Naive thymus-derived CD4-positive, alpha-beta T cell (primary cell): ENCODE measurements at regions of chr3 and their contacts with region 1.

Region 1: GRCh38 chr3:189132231-189132707 is 39.5 kb upstream of the TPRG1 start:
- DNase-seq: peak in 8 of 9 donors; percentile 20 to 76 (median 62)
- ATAC-seq: peak; percentile 96
- H3K4me3 ChIP-seq: peak overlapping the region; percentile 26
- H3K4me3 Mint-ChIP-seq: peak overlapping the region; percentile 39 to 83 (median 71)
- H3K27ac ChIP-seq: peak overlapping the region; percentile 22
- H3K27ac Mint-ChIP-seq: peak overlapping the region; percentile 43 to 98 (median 79)
- H3K4me1 ChIP-seq: peaks cover 13 to 34% of the 10 kb centered on the region in 2 donors
- H3K4me1 Mint-ChIP-seq: peaks cover 13 to 38% (median 23%) of the 10 kb centered on the region in 7 donors
- H3K27me3 ChIP-seq: no peaks in the 10 kb centered on the region
- H3K27me3 Mint-ChIP-seq: no peaks in the 10 kb centered on the region

Region 2: GRCh38 chr3:187802928-187803259 is 1329.4 kb before region 1 on chr3:
- CTCF ChIA-PET with region 1: no interaction called
- POLR2A ChIA-PET with region 1: no interaction called
- intact Hi-C with region 1: loop called in 1 of 2 experiments (anchors 1 kb)
- DNase-seq: peak in 1 of 9 donors; percentile 66
- ATAC-seq: peak; percentile 56
- H3K4me3 ChIP-seq: no peak overlapping the region
- H3K4me3 Mint-ChIP-seq: peak overlapping the region in 6 of 10 donors; percentile 14 to 69 (median 34)
- H3K27ac ChIP-seq: no peak overlapping the region
- H3K27ac Mint-ChIP-seq: peak overlapping the region in 1 of 9 donors; percentile 90
- H3K4me1 ChIP-seq: peaks cover 22 to 47% of the 10 kb centered on the region in 2 donors
- H3K4me1 Mint-ChIP-seq: peaks cover 23 to 93% (median 44%) of the 10 kb centered on the region in 7 donors
- H3K27me3 ChIP-seq: no peaks in the 10 kb centered on the region
- H3K27me3 Mint-ChIP-seq: no peaks in the 10 kb centered on the region

Region 3: GRCh38 chr3:188389711-188390342 is 742.4 kb before region 1 on chr3:
- CTCF ChIA-PET with region 1: no interaction called
- POLR2A ChIA-PET with region 1: no interaction called
- intact Hi-C with region 1: loop called in 1 of 2 experiments (anchors 10 kb)
- DNase-seq: peak in 7 of 9 donors; percentile 13 to 45 (median 34)
- ATAC-seq: peak; percentile 91
- H3K4me3 ChIP-seq: no peak overlapping the region
- H3K4me3 Mint-ChIP-seq: peak overlapping the region in 8 of 10 donors; percentile 5 to 70 (median 17)
- H3K27ac ChIP-seq: no peak overlapping the region
- H3K27ac Mint-ChIP-seq: peak overlapping the region in 8 of 9 donors; percentile 4 to 74 (median 60)
- H3K4me1 ChIP-seq: no peaks in the 10 kb centered on the region
- H3K4me1 Mint-ChIP-seq: peaks cover 18 to 32% (median 26%) of the 10 kb centered on the region in 7 donors
- H3K27me3 ChIP-seq: no peaks in the 10 kb centered on the region
- H3K27me3 Mint-ChIP-seq: no peaks in the 10 kb centered on the region

Region 4: GRCh38 chr3:188914552-188914951 is 217.7 kb before region 1 on chr3:
- CTCF ChIA-PET with region 1: no interaction called
- POLR2A ChIA-PET with region 1: no interaction called
- intact Hi-C with region 1: loop called in 1 of 2 experiments (anchors 1 kb)
- DNase-seq: no peak
- ATAC-seq: peak; percentile 70
- H3K4me3 ChIP-seq: no peak overlapping the region
- H3K4me3 Mint-ChIP-seq: peak overlapping the region in 1 of 10 donors; percentile 41
- H3K27ac ChIP-seq: no peak overlapping the region
- H3K27ac Mint-ChIP-seq: peak overlapping the region in 2 of 9 donors; percentile 28 to 34
- H3K4me1 ChIP-seq: peaks cover 16 to 18% of the 10 kb centered on the region in 2 donors
- H3K4me1 Mint-ChIP-seq: peaks cover 21 to 42% (median 32%) of the 10 kb centered on the region in 7 donors
- H3K27me3 ChIP-seq: no peaks in the 10 kb centered on the region
- H3K27me3 Mint-ChIP-seq: no peaks in the 10 kb centered on the region

Region 5: DNA sequence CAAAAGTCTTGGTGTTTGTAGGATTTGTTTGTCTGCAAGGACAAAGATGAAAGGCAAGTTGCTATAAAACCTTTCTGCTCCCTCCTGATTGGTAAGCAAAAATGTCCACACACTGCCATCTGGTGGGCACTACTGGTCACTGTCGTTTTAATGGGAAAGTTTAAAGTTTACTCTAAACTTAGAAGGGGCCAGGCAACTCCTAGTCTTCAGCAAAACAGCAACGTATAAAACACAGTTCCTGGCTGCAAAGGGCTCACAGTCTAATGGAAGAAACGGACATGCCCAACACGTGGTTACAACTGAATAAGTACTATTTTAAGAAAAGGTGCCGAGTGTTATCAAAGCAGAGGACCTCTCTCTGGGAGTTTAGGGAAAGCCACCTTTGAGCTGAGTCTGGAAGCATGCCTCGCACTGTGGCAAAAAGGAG is 15.8 kb after region 1 on chr3:
- CTCF ChIA-PET with region 1: interaction called, 6 read pairs
- POLR2A ChIA-PET with region 1: no interaction called
- intact Hi-C with region 1: loop called in 1 of 2 experiments (anchors 1 kb)
- DNase-seq: peak; percentile 22 to 61 (median 51)
- ATAC-seq: peak; percentile 85
- H3K4me3 ChIP-seq: no peak overlapping the region
- H3K4me3 Mint-ChIP-seq: no peak overlapping the region
- H3K27ac ChIP-seq: no peak overlapping the region
- H3K27ac Mint-ChIP-seq: peak overlapping the region in 1 of 9 donors; percentile 21
- H3K4me1 ChIP-seq: peaks cover 0 to 16% of the 10 kb centered on the region in 2 donors
- H3K4me1 Mint-ChIP-seq: peaks cover 6 to 35% (median 8%) of the 10 kb centered on the region in 7 donors
- H3K27me3 ChIP-seq: no peaks in the 10 kb centered on the region
- H3K27me3 Mint-ChIP-seq: peaks cover 0 to 20% (median 0%) of the 10 kb centered on the region in 5 donors

Region 6: DNA sequence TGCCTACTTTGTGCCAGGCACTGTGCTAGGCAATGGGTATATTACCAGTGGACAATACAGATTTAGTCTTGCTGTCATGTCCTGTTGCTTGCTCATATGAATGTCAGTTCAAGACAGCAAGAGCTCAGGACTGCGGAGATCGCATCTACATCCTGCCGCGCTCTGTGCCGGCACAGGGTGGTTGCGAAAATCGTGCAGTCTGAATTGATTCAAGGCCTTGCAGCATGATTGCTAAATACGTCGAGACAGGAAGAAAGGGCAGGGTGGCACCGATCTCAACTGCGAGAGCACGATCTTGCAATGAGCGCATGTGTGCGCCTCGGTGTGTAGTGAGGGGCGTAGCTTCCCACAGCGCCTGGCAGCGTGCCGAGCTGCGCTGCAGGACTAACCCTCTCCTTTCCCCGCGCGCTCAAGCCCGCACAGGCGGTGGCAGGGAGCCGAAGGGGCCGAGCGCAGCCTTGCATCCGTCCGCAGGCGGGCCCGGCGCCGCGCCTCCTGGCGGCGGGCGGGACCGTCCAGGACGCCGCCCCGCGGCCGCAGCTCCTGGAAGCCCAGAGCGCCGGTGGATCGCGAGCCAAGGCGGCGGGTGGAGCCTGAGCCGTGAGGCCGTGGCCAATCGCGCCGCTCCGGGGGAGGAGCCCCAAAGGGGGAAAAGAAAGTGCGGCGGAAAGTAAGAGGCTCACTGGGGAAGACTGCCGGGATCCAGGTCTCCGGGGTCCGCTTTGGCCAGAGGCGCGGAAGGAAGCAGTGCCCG is 1381.3 kb after region 1 on chr3 and contains the start of gene IL1RAP:
- CTCF ChIA-PET with region 1: no interaction called
- POLR2A ChIA-PET with region 1: no interaction called
- intact Hi-C with region 1: loop called in 1 of 2 experiments (anchors 10 kb)
- DNase-seq: peak; percentile 80 to 93 (median 90)
- ATAC-seq: peak; percentile 93
- H3K4me3 ChIP-seq: peak within 1 kb of the TSS; percentile 93
- H3K4me3 Mint-ChIP-seq: peak within 1 kb of the TSS; percentile 85 to 98 (median 92)
- H3K27ac ChIP-seq: peak within 1 kb of the TSS; percentile 77
- H3K27ac Mint-ChIP-seq: peak within 1 kb of the TSS in 7 of 9 donors; percentile 86 to 98 (median 96)
- H3K4me1 ChIP-seq: peaks cover 11 to 15% of the 10 kb centered on the region in 2 donors
- H3K4me1 Mint-ChIP-seq: peaks cover 18 to 37% (median 26%) of the 10 kb centered on the region in 7 donors
- H3K27me3 ChIP-seq: no peaks in the 10 kb centered on the region
- H3K27me3 Mint-ChIP-seq: peaks cover 0 to 4% (median 0%) of the 10 kb centered on the region in 5 donors
- total RNA-seq, gene IL1RAP: 12.0 to 29.0 (median 14.8) TPM